MCF 10A (cell line): ENCODE measurements at regions of chr3 and their contacts with region 1.

Region 1: GRCh38 chr3:139455855-139456254 is 20.5 kb downstream of the RBP2 start:
- DNase-seq: no peak
- H3K4me3 Mint-ChIP-seq: no peak overlapping the region
- H3K27ac Mint-ChIP-seq: no peak overlapping the region
- H3K4me1 Mint-ChIP-seq: no peaks in the 10 kb centered on the region
- H3K27me3 Mint-ChIP-seq: no peaks in the 10 kb centered on the region
- CTCF ChIP-seq: no peak

Region 2: GRCh38 chr3:139378587-139379241 is 77.1 kb before region 1 on chr3:
- CTCF ChIA-PET with region 1: no interaction called
- POLR2A ChIA-PET with region 1: no interaction called
- intact Hi-C with region 1: no loop called
- DNase-seq: no peak
- H3K4me3 Mint-ChIP-seq: no peak overlapping the region
- H3K27ac Mint-ChIP-seq: no peak overlapping the region
- H3K4me1 Mint-ChIP-seq: peaks cover 7% of the 10 kb centered on the region
- H3K27me3 Mint-ChIP-seq: no peaks in the 10 kb centered on the region
- CTCF ChIP-seq: no peak

Region 3: GRCh38 chr3:139434764-139435307 is 21.0 kb before region 1 on chr3:
- CTCF ChIA-PET with region 1: no interaction called
- POLR2A ChIA-PET with region 1: interaction called, 10 read pairs
- intact Hi-C with region 1: no loop called
- DNase-seq: peak; percentile 84
- H3K4me3 Mint-ChIP-seq: peak overlapping the region; percentile 35
- H3K27ac Mint-ChIP-seq: peak overlapping the region; percentile 96
- H3K4me1 Mint-ChIP-seq: peaks cover 19% of the 10 kb centered on the region
- H3K27me3 Mint-ChIP-seq: no peaks in the 10 kb centered on the region
- CTCF ChIP-seq: no peak

Region 4: GRCh38 chr3:139732729-139733128 is 276.9 kb after region 1 on chr3:
- CTCF ChIA-PET with region 1: no interaction called
- POLR2A ChIA-PET with region 1: no interaction called
- intact Hi-C with region 1: no loop called
- DNase-seq: peak; percentile 11
- H3K4me3 Mint-ChIP-seq: no peak overlapping the region
- H3K27ac Mint-ChIP-seq: no peak overlapping the region
- H3K4me1 Mint-ChIP-seq: no peaks in the 10 kb centered on the region
- H3K27me3 Mint-ChIP-seq: peaks cover 8% of the 10 kb centered on the region
- CTCF ChIP-seq: no peak

Region 5: GRCh38 chr3:139906418-139906817 is 450.6 kb after region 1 on chr3:
- CTCF ChIA-PET with region 1: no interaction called
- POLR2A ChIA-PET with region 1: no interaction called
- intact Hi-C with region 1: no loop called
- DNase-seq: peak; percentile 54
- H3K4me3 Mint-ChIP-seq: no peak overlapping the region
- H3K27ac Mint-ChIP-seq: no peak overlapping the region
- H3K4me1 Mint-ChIP-seq: no peaks in the 10 kb centered on the region
- H3K27me3 Mint-ChIP-seq: no peaks in the 10 kb centered on the region
- CTCF ChIP-seq: no peak

Region 6: GRCh38 chr3:140585828-140586227 is 1130.0 kb after region 1 on chr3:
- CTCF ChIA-PET with region 1: no interaction called
- POLR2A ChIA-PET with region 1: no interaction called
- intact Hi-C with region 1: no loop called
- DNase-seq: no peak
- H3K4me3 Mint-ChIP-seq: no peak overlapping the region
- H3K27ac Mint-ChIP-seq: no peak overlapping the region
- H3K4me1 Mint-ChIP-seq: peaks cover 2% of the 10 kb centered on the region
- H3K27me3 Mint-ChIP-seq: no peaks in the 10 kb centered on the region
- CTCF ChIP-seq: no peak